Lower leg skin (tissue), 4 donors: ENCODE measurements at regions of chr15 and their contacts with region 1.

Region 1: DNA sequence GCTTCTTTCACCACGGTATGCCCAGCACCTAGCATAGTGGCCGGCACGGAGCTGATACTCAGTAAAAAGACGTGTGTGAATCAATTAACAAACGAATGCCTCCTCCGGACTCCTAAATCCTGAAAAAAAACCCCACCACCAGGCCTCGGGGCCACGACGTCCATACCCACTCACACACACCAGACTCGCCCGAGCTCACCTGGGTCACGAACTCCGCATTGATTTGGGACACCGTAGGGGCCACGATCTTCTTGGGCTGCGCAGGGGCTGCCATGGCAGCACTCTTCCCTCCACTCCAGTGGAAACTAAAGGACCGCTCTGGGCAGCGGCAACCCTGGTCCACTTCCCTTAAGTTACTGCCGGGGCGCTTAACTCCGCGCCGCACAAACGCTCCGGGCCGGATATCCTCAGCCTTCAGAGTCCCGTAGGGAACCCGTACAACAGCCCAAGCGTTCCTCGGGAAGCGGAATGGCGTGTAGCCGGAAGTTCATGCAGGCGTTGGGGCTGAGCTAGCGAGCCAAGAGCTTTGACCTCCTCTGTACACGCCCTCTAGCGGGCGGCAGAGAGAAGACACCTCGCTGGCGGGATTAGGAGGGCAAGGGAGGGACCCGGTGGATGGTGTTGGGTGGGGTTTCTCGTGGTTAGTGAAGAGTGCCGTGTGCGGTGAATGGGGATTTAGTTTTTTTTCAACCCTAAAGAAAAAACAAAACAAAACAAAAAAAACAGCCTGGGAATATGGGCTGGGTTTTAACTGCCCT is at the start of gene AQR:
- DNase-seq: peak; percentile 96 to 99
- H3K4me3 ChIP-seq: peak within 1 kb of the TSS; percentile 84
- CTCF ChIP-seq: peak in 1 of 3 donors; percentile 81
- POLR2A ChIP-seq: no peak
- total RNA-seq, gene AQR: 21.8 to 23.7 (median 22.5) TPM

Region 2: GRCh38 chr15:34951993-34952392 is 17.5 kb before region 1 on chr15:
- intact Hi-C with region 1: no loop called
- DNase-seq: no peak
- H3K4me3 ChIP-seq: no peak overlapping the region
- CTCF ChIP-seq: no peak
- POLR2A ChIP-seq: no peak

Region 3: DNA sequence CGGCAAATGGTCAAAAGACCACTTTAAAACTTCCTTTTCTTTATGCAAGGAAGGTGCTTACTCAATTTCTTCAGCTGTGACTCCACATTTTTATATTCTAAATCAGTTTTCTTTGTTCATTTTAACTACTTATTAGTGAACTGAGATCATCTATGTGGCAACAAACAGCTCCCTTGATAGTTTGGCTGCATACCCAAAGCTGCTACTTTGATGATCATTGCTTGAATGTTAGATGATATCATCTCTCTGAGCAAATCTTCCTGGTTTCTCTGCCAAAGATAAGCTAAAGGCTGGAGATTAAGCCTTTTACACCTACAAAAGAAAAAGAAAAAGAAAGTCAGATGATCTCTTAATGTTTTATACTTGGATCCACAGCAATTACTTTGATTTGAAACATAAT is 481.0 kb after region 1 on chr15:
- intact Hi-C with region 1: loop called (anchors 5 kb)
- DNase-seq: no peak
- H3K4me3 ChIP-seq: no peak overlapping the region
- CTCF ChIP-seq: no peak
- POLR2A ChIP-seq: no peak